ENCODE measurements at regions of chr14 and their contacts with region 1.

Region 1: GRCh38 chr14:71444030-71444822 is 488.0 kb upstream of the RGS6 start:
- DNase-seq: no peak
- H3K4me3 ChIP-seq: no peak overlapping the region
- CTCF ChIP-seq: no peak
- POLR2A ChIP-seq: no peak

Region 2: GRCh38 chr14:71380271-71380670 is 64.0 kb before region 1 on chr14:
- intact Hi-C with region 1: loop called (anchors 2 kb)
- DNase-seq: no peak
- H3K4me3 ChIP-seq: no peak overlapping the region
- CTCF ChIP-seq: no peak
- POLR2A ChIP-seq: no peak

Region 3: DNA sequence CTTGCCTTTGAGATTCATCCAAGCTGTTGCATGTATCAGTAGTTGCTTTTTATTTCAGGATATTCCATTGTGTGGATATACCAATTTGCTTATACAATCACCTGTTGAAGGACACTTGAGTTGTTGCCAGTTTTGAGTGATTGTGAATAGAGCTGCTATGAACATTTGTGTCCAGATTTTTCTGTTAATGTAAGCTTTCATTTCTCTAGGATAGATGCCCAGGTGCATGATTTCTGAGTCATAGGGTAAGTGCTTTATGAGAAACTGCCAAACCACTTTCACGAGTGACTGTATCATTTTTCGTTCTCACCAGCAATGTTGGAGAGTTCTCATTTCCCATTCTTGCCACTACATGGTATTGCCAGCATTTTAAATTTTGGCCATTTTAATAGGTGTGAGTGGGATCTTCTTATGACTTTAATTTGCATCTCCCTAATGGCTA is 53.4 kb after region 1 on chr14:
- intact Hi-C with region 1: no loop called
- DNase-seq: no peak
- H3K4me3 ChIP-seq: no peak overlapping the region
- CTCF ChIP-seq: no peak
- POLR2A ChIP-seq: no peak

Measured in lower leg skin (tissue), 4 donors.